PC-3 (cell line): ENCODE measurements at regions of chr10 and their contacts with region 1.

Region 1: DNA sequence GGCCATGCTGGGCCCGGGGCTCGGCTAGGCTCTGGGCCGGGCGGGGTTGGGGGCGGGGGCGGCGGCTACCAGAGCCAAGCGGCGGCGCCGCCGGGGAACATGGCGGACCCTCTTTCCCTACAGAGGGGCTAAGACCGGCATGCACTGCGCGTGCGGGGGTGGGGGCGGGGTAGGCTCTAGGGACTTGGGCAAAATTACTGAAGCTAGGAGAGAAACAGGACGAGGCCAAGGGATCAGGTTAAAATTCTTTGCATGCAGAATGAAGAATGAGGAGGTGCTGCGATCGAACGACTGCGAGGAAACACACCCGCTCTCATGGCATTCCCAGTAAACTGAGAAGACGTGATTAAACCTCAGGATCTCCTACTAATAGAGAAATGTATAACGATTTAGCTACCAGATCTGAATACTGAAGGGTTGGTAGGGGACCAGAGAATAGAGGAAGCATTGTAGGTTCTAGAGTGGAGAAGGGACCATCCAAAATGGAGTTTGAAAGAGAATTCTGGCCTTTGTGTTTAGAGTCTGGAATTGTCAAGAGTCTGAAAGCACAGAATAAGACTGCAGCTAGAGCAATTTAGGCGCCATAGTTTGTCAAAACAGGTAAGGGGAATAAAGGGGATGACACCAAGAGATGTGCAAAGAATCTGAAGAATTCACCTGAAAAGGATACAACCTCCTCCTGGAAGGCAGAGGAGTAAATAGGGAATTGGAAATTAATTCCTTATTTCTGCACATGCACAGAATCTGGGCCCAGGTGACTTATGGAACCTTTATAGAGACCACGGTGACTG is at the start of gene PPP3CB:
- DNase-seq: peak; percentile 100
- ATAC-seq: peak; percentile 79
- H3K4me3 ChIP-seq: peak within 1 kb of the TSS; percentile 83
- H3K27ac ChIP-seq: peak within 1 kb of the TSS; percentile 80
- H3K4me1 ChIP-seq: peaks cover 28% of the 10 kb centered on the region
- H3K27me3 ChIP-seq: no peaks in the 10 kb centered on the region
- CTCF ChIP-seq: no peak
- total RNA-seq, gene PPP3CB: 43.8 and 66.5 TPM in 2 replicates

Region 2: GRCh38 chr10:73246783-73247508 is 249.1 kb before region 1 on chr10 and contains the start of gene DNAJC9:
- CTCF ChIA-PET with region 1: interaction called, 6 read pairs
- POLR2A ChIA-PET with region 1: interaction called, 4 read pairs
- intact Hi-C with region 1: loop called (anchors 5 kb)
- DNase-seq: peak; percentile 100
- ATAC-seq: peak; percentile 84
- H3K4me3 ChIP-seq: peak within 1 kb of the TSS; percentile 69
- H3K27ac ChIP-seq: peak within 1 kb of the TSS; percentile 80
- H3K4me1 ChIP-seq: peaks cover 50% of the 10 kb centered on the region
- H3K27me3 ChIP-seq: no peaks in the 10 kb centered on the region
- CTCF ChIP-seq: peak; percentile 56
- total RNA-seq, gene DNAJC9: 282 and 283 TPM in 2 replicates

Region 3: GRCh38 chr10:73480158-73480557 is 15.9 kb before region 1 on chr10:
- CTCF ChIA-PET with region 1: no interaction called
- POLR2A ChIA-PET with region 1: interaction called, 8 read pairs
- intact Hi-C with region 1: loop called (anchors 1 kb)
- DNase-seq: peak; percentile 98
- ATAC-seq: peak; percentile 89
- H3K4me3 ChIP-seq: peak overlapping the region; percentile 0; the same call in 1 of the 2 replicates
- H3K27ac ChIP-seq: no peak overlapping the region
- H3K4me1 ChIP-seq: peaks cover 19% of the 10 kb centered on the region
- H3K27me3 ChIP-seq: no peaks in the 10 kb centered on the region
- CTCF ChIP-seq: no peak

Region 4: DNA sequence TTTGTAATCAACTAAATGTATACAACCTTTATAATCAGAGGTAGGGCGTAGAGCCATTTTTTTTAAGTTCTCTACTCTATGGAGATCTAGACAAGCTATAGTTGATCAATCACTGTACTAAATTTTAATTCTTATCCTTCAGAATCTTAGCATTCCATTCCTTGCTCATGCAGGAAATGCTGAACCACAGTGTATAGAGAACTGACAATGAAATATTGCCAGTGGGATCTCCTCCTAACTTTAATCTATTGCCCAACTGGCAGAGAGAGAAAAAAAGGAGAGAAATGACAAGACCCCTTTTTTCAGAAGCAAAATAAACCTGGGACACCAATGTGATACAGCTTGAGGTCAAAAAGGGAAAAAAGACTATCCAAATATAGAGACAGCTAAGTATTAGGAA is 26.2 kb after region 1 on chr10:
- CTCF ChIA-PET with region 1: no interaction called
- POLR2A ChIA-PET with region 1: no interaction called
- intact Hi-C with region 1: no loop called
- DNase-seq: no peak
- ATAC-seq: no peak
- H3K4me3 ChIP-seq: no peak overlapping the region
- H3K27ac ChIP-seq: no peak overlapping the region
- H3K4me1 ChIP-seq: peaks cover 6% of the 10 kb centered on the region; the same call in 1 of the 2 replicates
- H3K27me3 ChIP-seq: no peaks in the 10 kb centered on the region
- CTCF ChIP-seq: no peak

Region 5: GRCh38 chr10:73552819-73553715 is 57.0 kb after region 1 on chr10:
- CTCF ChIA-PET with region 1: no interaction called
- POLR2A ChIA-PET with region 1: no interaction called
- intact Hi-C with region 1: no loop called
- DNase-seq: no peak
- ATAC-seq: peak; percentile 32; the same call in 1 of the 2 replicates
- H3K4me3 ChIP-seq: no peak overlapping the region
- H3K27ac ChIP-seq: no peak overlapping the region
- H3K4me1 ChIP-seq: no peaks in the 10 kb centered on the region
- H3K27me3 ChIP-seq: no peaks in the 10 kb centered on the region
- CTCF ChIP-seq: no peak

Region 6: DNA sequence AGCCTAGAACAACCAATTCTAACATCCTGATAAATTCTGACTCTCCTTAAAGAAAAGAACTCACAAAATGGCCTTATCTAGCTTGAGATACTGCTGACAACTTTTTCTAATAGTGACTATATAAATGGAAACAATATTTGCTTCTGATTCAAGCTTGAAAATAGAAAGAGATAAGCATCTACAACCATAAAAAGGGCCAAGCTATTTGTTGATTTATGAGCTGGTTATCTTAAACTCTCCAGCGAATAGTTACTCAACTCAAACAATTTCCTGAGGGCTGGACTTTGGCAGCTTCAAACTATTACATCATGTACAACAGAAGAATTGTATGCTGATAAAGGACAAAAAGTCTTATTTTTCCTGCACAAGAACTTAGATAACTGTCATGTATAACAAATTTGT is 90.5 kb after region 1 on chr10:
- CTCF ChIA-PET with region 1: no interaction called
- POLR2A ChIA-PET with region 1: interaction called, 14 read pairs
- intact Hi-C with region 1: no loop called
- DNase-seq: peak; percentile 100
- ATAC-seq: peak; percentile 75
- H3K4me3 ChIP-seq: peak overlapping the region; percentile 19
- H3K27ac ChIP-seq: peak overlapping the region; percentile 66
- H3K4me1 ChIP-seq: peaks cover 68% of the 10 kb centered on the region
- H3K27me3 ChIP-seq: no peaks in the 10 kb centered on the region
- CTCF ChIP-seq: no peak

Region 7: GRCh38 chr10:73625884-73626752 is 130.0 kb after region 1 on chr10:
- CTCF ChIA-PET with region 1: no interaction called
- POLR2A ChIA-PET with region 1: interaction called, 12 read pairs
- intact Hi-C with region 1: loop called (anchors 1 kb)
- DNase-seq: peak; percentile 100
- ATAC-seq: peak; percentile 97
- H3K4me3 ChIP-seq: peak overlapping the region; percentile 76
- H3K27ac ChIP-seq: peak overlapping the region; percentile 40
- H3K4me1 ChIP-seq: peaks cover 14% of the 10 kb centered on the region
- H3K27me3 ChIP-seq: no peaks in the 10 kb centered on the region
- CTCF ChIP-seq: no peak